GM12878 (cell line): ENCODE measurements at regions of chr4 and their contacts with region 1.

Region 1: DNA sequence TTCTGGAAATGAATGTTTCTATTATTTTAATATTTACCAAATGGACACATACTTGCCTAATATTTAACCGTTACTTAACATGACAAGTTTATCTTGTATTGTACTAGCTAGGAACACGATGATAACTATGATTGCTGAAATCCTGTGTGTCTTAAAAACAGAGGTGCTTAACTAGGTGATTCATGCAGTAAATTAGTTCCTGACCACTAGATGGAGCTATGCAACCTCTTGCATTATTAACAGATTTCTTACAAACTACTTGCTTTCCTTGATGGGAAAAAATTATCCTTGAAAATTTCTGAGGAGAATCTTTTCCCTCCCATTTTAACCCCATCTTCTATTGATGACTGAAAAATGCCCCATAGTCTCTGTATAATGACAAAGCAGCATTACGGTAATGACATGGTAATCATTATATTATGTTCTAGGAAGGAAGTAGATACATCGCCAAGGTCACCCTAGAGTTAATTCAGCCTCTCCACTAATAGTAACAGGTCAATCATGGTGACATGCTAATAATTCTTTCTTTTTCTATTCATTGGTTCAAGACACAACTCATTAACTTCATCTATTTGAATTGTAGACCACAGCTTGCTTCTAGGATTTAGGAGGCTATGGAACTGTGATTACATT is 844.2 kb downstream of the RAPGEF2 start:
- DNase-seq: peak; percentile 2
- ATAC-seq: peak; percentile 76
- H3K4me3 ChIP-seq: no peak overlapping the region
- H3K27ac ChIP-seq: no peak overlapping the region
- H3K4me1 ChIP-seq: no peaks in the 10 kb centered on the region
- H3K27me3 ChIP-seq: no peaks in the 10 kb centered on the region
- CTCF ChIP-seq: peak; percentile 60 to 77 (median 68); a peak in 5 of 6 replicates
- EP300 ChIP-seq: no peak
- POLR2A ChIP-seq: no peak
- RAD21 ChIP-seq: peak; percentile 83

Region 2: GRCh38 chr4:159487284-159487747 is 459.8 kb before region 1 on chr4:
- CTCF ChIA-PET with region 1: no interaction called
- POLR2A ChIA-PET with region 1: no interaction called
- RAD21 ChIA-PET with region 1: no interaction called
- SMC1A ChIA-PET with region 1: interaction called, 3 read pairs
- in situ Hi-C with region 1: no loop called
- intact Hi-C with region 1: loop called (anchors 5 kb)
- DNase-seq: peak; percentile 17
- ATAC-seq: peak; percentile 98
- H3K4me3 ChIP-seq: no peak overlapping the region
- H3K27ac ChIP-seq: no peak overlapping the region
- H3K4me1 ChIP-seq: no peaks in the 10 kb centered on the region
- H3K27me3 ChIP-seq: no peaks in the 10 kb centered on the region; a peak in 1 of 4 replicates
- CTCF ChIP-seq: peak; percentile 75 to 80 (median 75)
- EP300 ChIP-seq: no peak
- POLR2A ChIP-seq: no peak
- RAD21 ChIP-seq: peak; percentile 76

Region 3: GRCh38 chr4:160175064-160175645 is 228.1 kb after region 1 on chr4:
- CTCF ChIA-PET with region 1: interaction called, 6 read pairs
- POLR2A ChIA-PET with region 1: no interaction called
- RAD21 ChIA-PET with region 1: no interaction called
- SMC1A ChIA-PET with region 1: no interaction called
- in situ Hi-C with region 1: no loop called
- intact Hi-C with region 1: loop called (anchors 5 kb)
- DNase-seq: no peak
- ATAC-seq: no peak
- H3K4me3 ChIP-seq: no peak overlapping the region
- H3K27ac ChIP-seq: no peak overlapping the region
- H3K4me1 ChIP-seq: no peaks in the 10 kb centered on the region
- H3K27me3 ChIP-seq: no peaks in the 10 kb centered on the region
- CTCF ChIP-seq: peak in 1 of 3 experiments; percentile 22; a peak in 1 of 6 replicates
- EP300 ChIP-seq: no peak
- POLR2A ChIP-seq: no peak
- RAD21 ChIP-seq: peak; percentile 39

Region 4: GRCh38 chr4:160450876-160451275 is 503.8 kb after region 1 on chr4:
- CTCF ChIA-PET with region 1: no interaction called
- POLR2A ChIA-PET with region 1: no interaction called
- RAD21 ChIA-PET with region 1: no interaction called
- SMC1A ChIA-PET with region 1: no interaction called
- in situ Hi-C with region 1: no loop called
- intact Hi-C with region 1: loop called (anchors 10 kb)
- DNase-seq: no peak
- ATAC-seq: no peak
- H3K4me3 ChIP-seq: no peak overlapping the region
- H3K27ac ChIP-seq: no peak overlapping the region
- H3K4me1 ChIP-seq: no peaks in the 10 kb centered on the region
- H3K27me3 ChIP-seq: no peaks in the 10 kb centered on the region
- CTCF ChIP-seq: no peak
- EP300 ChIP-seq: no peak
- POLR2A ChIP-seq: no peak
- RAD21 ChIP-seq: no peak

Region 5: DNA sequence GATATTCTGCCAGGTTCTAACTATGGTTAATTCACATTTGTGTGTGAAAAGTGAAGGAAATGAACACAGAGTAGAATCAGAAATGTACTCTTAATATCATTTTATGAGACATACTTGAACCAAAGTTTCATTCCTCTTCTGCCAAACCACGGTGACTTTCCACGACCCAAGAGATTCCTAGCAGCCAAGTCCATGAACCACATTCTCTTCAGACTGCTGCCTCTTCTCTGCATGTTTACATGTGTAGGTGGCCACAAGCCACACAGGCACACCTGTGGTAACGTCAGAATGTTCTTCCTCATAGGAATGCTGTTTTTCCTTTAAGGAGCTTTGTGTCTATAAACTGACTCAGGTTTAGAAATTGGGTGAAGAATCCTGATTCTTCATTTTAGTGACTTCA is 567.0 kb after region 1 on chr4:
- CTCF ChIA-PET with region 1: no interaction called
- POLR2A ChIA-PET with region 1: no interaction called
- RAD21 ChIA-PET with region 1: no interaction called
- SMC1A ChIA-PET with region 1: no interaction called
- in situ Hi-C with region 1: no loop called
- intact Hi-C with region 1: no loop called
- DNase-seq: no peak
- ATAC-seq: no peak
- H3K4me3 ChIP-seq: no peak overlapping the region
- H3K27ac ChIP-seq: no peak overlapping the region
- H3K4me1 ChIP-seq: no peaks in the 10 kb centered on the region
- H3K27me3 ChIP-seq: no peaks in the 10 kb centered on the region
- CTCF ChIP-seq: no peak
- EP300 ChIP-seq: no peak
- POLR2A ChIP-seq: no peak
- RAD21 ChIP-seq: no peak